Activated naive CD8-positive, alpha-beta T cell treated with anti-CD3 and anti-CD28 coated beads, Interleukin-2, amount 10 ng/mL, durations not matched to agents 7 days and 5 days (primary cell): ENCODE measurements at regions of chr15 and their contacts with region 1.

Region 1: GRCh38 chr15:43510200-43511011 is 7.0 kb upstream of the MAP1A start:
- DNase-seq: peak; percentile 98
- ATAC-seq: peak; percentile 92
- H3K4me3 Mint-ChIP-seq: peak overlapping the region; percentile 87
- H3K27ac Mint-ChIP-seq: peak overlapping the region; percentile 90
- H3K4me1 Mint-ChIP-seq: peaks cover 39% of the 10 kb centered on the region
- H3K27me3 Mint-ChIP-seq: no peaks in the 10 kb centered on the region

Region 2: DNA sequence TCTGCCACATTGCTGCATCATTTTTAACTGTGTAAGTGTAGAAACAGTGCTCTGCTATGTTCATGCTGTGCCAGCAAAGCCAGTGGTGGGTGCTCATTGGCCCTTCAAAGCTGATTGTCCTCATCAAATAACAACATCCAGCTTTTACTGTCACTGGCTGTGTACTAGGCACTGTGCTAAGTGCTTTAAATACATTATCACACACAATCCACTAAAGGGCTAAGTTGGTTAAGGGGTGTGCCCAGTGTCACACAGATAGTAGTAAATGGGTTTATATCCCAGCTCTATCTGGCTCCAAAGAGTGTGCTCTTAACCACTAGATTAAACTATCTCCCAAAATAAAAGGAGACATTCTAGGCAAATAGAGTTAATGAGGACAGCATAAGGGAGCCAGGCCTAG is 131.8 kb before region 1 on chr15:
- POLR2A ChIA-PET with region 1: no interaction called
- DNase-seq: no peak
- ATAC-seq: no peak
- H3K4me3 Mint-ChIP-seq: no peak overlapping the region
- H3K27ac Mint-ChIP-seq: no peak overlapping the region
- H3K4me1 Mint-ChIP-seq: peaks cover 1% of the 10 kb centered on the region
- H3K27me3 Mint-ChIP-seq: no peaks in the 10 kb centered on the region

Region 3: DNA sequence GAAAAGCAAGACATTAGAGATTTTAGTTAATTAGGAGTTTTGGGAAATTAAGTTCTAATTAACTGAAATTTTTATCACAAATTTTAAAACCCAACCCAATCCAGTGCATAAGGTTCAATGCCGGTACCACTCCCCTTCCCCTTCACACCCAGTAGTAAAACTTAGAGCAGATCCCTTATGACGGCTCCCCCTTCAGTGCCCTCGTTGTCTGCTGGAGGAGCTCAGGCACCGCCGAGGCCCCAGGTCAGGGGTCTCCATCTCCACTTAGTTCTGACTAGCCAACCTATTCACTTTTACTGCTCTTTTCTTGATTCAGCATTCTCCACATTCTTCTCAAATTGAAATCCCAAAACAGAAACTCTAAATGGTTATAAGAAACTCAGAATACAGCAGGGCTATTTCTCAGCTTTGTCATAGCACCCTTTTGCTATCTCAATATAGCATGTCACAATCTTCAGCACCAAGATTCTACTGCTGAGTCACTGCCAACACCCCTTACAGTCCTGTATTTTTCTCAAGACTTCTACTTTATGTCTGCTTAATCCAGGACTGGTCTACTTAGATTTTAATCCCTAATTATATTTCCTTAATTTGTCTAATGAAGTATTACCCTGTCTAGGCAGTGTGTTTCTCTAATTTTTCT is 99.7 kb before region 1 on chr15:
- POLR2A ChIA-PET with region 1: no interaction called
- DNase-seq: no peak
- ATAC-seq: no peak
- H3K4me3 Mint-ChIP-seq: no peak overlapping the region
- H3K27ac Mint-ChIP-seq: no peak overlapping the region
- H3K4me1 Mint-ChIP-seq: no peaks in the 10 kb centered on the region
- H3K27me3 Mint-ChIP-seq: no peaks in the 10 kb centered on the region

Region 4: GRCh38 chr15:43469867-43470266 is 40.5 kb before region 1 on chr15:
- POLR2A ChIA-PET with region 1: no interaction called
- DNase-seq: no peak
- ATAC-seq: no peak
- H3K4me3 Mint-ChIP-seq: no peak overlapping the region
- H3K27ac Mint-ChIP-seq: no peak overlapping the region
- H3K4me1 Mint-ChIP-seq: peaks cover 2% of the 10 kb centered on the region
- H3K27me3 Mint-ChIP-seq: no peaks in the 10 kb centered on the region

Region 5: DNA sequence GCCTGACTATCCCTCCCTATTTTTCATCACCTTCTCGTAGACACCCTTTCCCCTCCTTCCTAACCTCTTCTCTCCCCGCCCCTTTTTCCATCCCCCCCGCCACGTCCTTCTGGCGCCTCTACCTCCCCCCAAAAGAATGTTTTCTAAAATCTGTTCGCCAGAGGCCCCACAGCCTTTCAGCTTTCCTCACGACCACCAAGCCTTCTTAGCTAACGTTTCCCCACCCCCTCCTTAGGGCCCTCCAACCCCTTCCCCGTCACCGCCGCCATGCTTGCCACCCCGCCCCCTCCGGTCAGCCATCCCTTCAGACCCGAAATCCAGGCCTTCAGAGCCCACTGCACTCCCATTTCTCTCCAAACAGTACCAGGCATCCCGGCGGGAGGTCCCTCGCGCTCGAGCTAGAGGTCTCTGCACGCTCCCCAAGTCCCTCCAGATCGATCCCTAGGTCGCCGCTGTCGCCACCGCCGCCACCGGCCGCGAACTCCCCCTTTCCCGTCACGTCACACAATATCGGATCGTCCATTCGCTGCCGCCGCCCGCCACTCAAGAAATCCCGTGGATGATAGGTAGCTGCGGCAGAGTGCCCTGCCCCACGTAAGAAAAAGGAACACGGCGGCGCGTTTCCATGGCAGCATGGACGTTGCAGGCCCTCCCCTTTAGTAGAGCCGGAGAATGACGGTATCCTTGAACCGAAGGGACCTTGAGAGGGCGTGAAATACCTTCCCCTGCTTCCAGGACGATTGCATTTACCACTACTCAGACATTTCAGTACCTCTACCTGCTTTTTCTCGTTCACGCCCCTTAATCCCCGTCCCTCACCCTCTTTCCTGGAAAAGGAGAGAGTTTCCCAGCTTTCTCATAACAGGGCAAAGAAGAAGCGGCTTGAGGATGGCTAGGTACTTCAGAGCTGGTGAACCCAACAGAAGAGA is 17.5 kb before region 1 on chr15 and contains the start of gene TP53BP1:
- POLR2A ChIA-PET with region 1: interaction called, 25 read pairs
- DNase-seq: peak; percentile 90
- ATAC-seq: peak; percentile 99
- H3K4me3 Mint-ChIP-seq: peak within 1 kb of the TSS; percentile 100
- H3K27ac Mint-ChIP-seq: peak within 1 kb of the TSS; percentile 95
- H3K4me1 Mint-ChIP-seq: peaks cover 25% of the 10 kb centered on the region
- H3K27me3 Mint-ChIP-seq: peaks cover 2% of the 10 kb centered on the region
- total RNA-seq, gene TP53BP1: 27.1 to 27.5 TPM

Region 6: GRCh38 chr15:43541785-43542184 is 31.4 kb after region 1 on chr15:
- POLR2A ChIA-PET with region 1: no interaction called
- DNase-seq: no peak
- ATAC-seq: no peak
- H3K4me3 Mint-ChIP-seq: no peak overlapping the region
- H3K27ac Mint-ChIP-seq: no peak overlapping the region
- H3K4me1 Mint-ChIP-seq: peaks cover 8% of the 10 kb centered on the region
- H3K27me3 Mint-ChIP-seq: no peaks in the 10 kb centered on the region